Colonic mucosa (tissue), 4 donors: ENCODE measurements at regions of chr6 and their contacts with region 1.

Region 1: DNA sequence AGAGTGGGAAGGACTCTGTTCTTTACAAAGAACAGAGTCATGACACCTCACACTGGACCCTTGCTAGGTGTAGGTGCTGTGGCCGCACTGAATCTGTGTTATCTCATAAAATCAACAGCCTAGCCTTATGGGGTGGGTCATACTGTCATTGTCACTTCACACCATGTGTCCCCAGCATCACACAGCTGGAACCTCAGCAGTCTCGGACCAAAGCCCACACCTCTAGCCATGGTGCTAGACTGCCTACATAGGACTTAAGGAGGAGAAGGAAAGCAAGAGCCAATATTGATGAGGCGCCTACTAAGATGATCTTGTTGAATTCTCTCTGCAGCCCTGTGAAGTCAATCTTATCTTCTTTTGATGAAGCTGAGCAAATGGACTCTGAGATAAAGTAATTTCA is 31.0 kb downstream of the UNC5CL start:
- DNase-seq: no peak
- H3K4me3 ChIP-seq: no peak overlapping the region
- H3K27ac ChIP-seq: no peak overlapping the region
- H3K4me1 ChIP-seq: no peaks in the 10 kb centered on the region
- H3K27me3 ChIP-seq: no peaks in the 10 kb centered on the region
- CTCF ChIP-seq: no peak

Region 2: GRCh38 chr6:41066867-41067304 is 58.9 kb after region 1 on chr6:
- intact Hi-C with region 1: loop called (anchors 5 kb)
- DNase-seq: peak; percentile 88
- H3K4me3 ChIP-seq: no peak overlapping the region
- H3K27ac ChIP-seq: peak overlapping the region; percentile 76
- H3K4me1 ChIP-seq: peaks cover 13% of the 10 kb centered on the region
- H3K27me3 ChIP-seq: no peaks in the 10 kb centered on the region
- CTCF ChIP-seq: peak; percentile 91